ENCODE measurements at regions of chr3 and their contacts with region 1.

Region 1: GRCh38 chr3:45929042-45929679 is 14.1 kb upstream of the CXCR6 start:
- H3K4me3 Mint-ChIP-seq: no peak overlapping the region
- H3K27ac Mint-ChIP-seq: no peak overlapping the region
- H3K4me1 Mint-ChIP-seq: peaks cover 9% of the 10 kb centered on the region
- H3K27me3 Mint-ChIP-seq: no peaks in the 10 kb centered on the region

Region 2: DNA sequence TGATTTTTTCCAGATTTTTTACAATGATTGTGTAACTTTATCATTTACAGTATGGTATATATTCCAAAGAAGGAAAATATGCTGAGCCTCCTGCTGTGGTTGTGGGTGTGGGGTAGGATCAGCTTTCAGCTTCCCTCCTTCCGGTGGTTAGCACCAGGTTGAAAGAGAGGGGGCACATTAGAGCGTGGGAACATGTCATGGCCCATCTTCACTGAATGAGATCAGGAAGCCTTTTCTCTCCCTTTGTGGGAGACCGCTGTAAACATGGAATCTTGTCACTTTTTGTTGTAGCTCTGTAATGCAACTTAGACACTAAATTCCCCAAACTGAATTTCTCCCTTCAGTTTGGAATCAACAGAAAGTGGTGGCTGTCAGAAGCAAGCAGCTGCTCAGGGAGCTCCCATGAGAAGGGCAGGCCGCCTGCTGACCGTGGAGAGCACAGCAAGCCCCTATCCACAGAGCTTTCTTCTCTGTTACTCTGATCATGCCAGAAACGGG is 421.3 kb before region 1 on chr3:
- intact Hi-C with region 1: loop called (anchors 5 kb)
- H3K4me3 Mint-ChIP-seq: no peak overlapping the region
- H3K27ac Mint-ChIP-seq: no peak overlapping the region
- H3K4me1 Mint-ChIP-seq: no peaks in the 10 kb centered on the region
- H3K27me3 Mint-ChIP-seq: no peaks in the 10 kb centered on the region

Region 3: DNA sequence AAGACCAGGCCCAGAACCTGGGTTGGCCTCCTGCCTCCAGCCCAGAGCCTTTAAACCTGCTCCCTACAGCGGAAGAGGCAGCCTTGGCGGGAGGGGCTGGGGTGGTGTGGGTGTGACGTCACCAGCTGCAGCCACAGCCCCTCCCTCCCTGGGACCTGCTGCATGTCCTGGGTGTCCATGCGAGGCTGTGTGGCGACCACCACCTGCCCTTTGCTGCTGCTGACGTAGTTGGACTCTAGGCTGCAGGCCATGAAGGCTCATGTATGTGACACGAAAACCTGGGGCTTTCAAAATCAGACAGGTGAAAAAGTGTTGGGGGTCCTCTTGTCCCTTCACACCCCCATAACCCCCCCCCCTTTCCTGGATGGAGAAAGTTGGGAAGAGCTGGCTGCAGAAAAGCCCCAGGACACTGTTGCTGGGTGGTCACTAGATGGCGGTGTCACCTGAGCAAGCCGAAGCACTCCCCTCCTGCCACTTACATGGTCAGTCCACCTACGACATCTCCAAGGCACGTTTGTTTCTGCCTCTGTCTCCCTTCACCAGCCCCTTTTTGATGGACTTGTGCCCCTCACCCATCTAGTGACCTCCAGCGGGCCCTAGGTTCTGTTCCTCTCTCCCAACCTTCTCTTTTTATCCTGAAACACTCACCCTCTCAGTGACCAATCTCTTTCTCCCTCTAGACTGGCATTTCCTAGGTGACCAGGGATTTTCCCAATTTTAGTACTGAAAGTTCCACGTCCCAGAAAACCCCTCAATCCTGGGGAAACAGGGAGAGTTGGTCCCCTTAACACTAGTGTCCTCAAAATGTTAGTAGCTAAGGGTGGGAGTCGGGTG is 168.1 kb before region 1 on chr3:
- intact Hi-C with region 1: loop called (anchors 1 kb)
- H3K4me3 Mint-ChIP-seq: no peak overlapping the region
- H3K27ac Mint-ChIP-seq: no peak overlapping the region
- H3K4me1 Mint-ChIP-seq: peaks cover 5% of the 10 kb centered on the region
- H3K27me3 Mint-ChIP-seq: peaks cover 3% of the 10 kb centered on the region

Region 4: GRCh38 chr3:45864760-45865519 is 64.2 kb before region 1 on chr3:
- intact Hi-C with region 1: no loop called
- H3K4me3 Mint-ChIP-seq: no peak overlapping the region
- H3K27ac Mint-ChIP-seq: no peak overlapping the region
- H3K4me1 Mint-ChIP-seq: peaks cover 8% of the 10 kb centered on the region
- H3K27me3 Mint-ChIP-seq: peaks cover 7% of the 10 kb centered on the region

Region 5: GRCh38 chr3:45995236-45996192 is 66.4 kb after region 1 on chr3 and contains the start of gene FYCO1:
- intact Hi-C with region 1: no loop called
- H3K4me3 Mint-ChIP-seq: peak within 1 kb of the TSS; percentile 83
- H3K27ac Mint-ChIP-seq: peak within 1 kb of the TSS; percentile 93
- H3K4me1 Mint-ChIP-seq: peaks cover 55% of the 10 kb centered on the region
- H3K27me3 Mint-ChIP-seq: peaks cover 5% of the 10 kb centered on the region